Aorta (tissue), 5 donors: ENCODE measurements at regions of chr9 and their contacts with region 1.

Region 1: DNA sequence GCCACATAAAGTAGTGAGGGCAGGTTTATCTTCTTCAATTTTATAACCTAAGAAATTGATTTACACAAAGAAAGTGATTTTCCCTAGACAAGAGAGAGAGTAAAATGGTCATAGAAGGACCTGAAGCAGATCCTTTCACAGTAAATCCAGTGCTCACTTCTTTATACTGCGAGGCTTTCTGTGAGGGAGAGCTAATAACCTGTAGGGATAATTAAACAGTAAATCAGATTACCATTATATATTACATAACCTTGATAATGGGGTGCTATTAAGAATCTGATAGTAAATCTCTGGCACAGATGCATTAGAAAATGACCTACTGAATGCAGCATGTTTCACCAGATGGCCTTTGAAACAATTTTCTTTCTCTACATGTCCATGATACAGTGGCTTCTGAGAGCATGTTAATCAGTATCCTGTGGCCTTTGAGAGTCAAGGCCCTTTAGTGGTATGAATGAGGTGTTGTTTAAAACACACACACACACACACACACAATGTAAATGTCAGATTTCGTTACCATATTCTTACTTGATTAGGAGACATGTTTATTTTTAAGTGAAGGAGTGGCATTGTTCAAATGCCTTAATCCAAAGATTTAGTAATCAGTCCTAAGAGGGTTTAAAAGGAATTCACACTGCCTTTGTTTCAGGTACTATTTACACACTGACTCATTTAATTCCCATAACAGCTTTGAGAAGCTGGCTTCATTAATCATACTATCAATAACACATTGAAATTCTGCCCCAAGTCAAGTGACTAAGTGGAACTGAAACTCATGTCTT is 124.7 kb downstream of the ALDH1A1 start:
- DNase-seq: no peak
- ATAC-seq: no peak
- H3K4me3 ChIP-seq: no peak overlapping the region
- H3K27ac ChIP-seq: no peak overlapping the region
- H3K4me1 ChIP-seq: no peaks in the 10 kb centered on the region
- H3K27me3 ChIP-seq: no peaks in the 10 kb centered on the region

Region 2: GRCh38 chr9:72038890-72039410 is 789.2 kb before region 1 on chr9:
- intact Hi-C with region 1: loop called (anchors 5 to 10 kb)
- DNase-seq: peak; percentile 72 to 85
- ATAC-seq: peak; percentile 92
- H3K4me3 ChIP-seq: no peak overlapping the region
- H3K27ac ChIP-seq: no peak overlapping the region
- H3K4me1 ChIP-seq: no peaks in the 10 kb centered on the region
- H3K27me3 ChIP-seq: no peaks in the 10 kb centered on the region

Region 3: GRCh38 chr9:72280913-72281500 is 547.1 kb before region 1 on chr9:
- intact Hi-C with region 1: loop called (anchors 5 kb)
- DNase-seq: peak; percentile 76 to 83
- ATAC-seq: peak; percentile 86
- H3K4me3 ChIP-seq: no peak overlapping the region
- H3K27ac ChIP-seq: no peak overlapping the region
- H3K4me1 ChIP-seq: no peaks in the 10 kb centered on the region
- H3K27me3 ChIP-seq: no peaks in the 10 kb centered on the region